ENCODE measurements at regions of chr16 and their contacts with region 1.

Region 1: DNA sequence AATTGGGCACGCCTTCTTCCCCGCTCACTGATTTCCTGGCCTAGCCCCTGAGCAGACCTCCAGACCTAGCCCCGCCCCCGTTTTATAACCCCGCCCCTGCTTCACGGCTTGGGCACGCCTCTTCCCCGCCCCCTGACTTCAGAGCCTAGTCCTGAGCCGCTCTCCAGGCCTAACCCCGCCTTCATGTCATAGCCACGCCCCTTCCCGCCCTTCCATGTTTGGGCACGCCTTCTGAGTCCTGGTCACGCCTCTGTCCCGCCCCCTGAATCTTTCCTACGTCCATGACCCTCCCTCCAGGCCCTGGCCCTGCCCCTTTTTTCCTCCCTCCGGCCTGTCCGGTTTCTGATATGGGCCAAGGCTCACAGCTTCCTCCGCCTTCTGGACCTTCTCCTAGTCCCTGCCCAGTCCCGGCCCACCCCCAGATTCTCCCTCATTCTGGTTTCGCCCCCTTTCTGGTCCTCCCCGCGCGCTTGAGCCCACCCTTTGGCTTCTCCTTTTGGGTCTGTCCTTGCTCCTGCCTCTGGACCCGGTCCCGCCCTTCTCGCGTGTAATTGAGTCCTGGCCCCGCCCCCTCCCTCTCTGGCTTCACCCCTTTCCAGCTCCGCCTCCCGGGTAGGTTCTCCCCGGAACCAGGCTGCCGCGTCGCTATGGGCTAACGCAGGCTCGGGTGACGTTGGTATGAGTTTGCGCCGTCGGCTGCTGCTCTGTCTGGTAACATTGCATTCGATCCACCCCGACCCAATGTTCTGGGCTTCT is 15.1 kb upstream of the EEF2K start:
- DNase-seq: peak; percentile 94
- H3K4me3 Mint-ChIP-seq: peak overlapping the region; percentile 88
- H3K27ac Mint-ChIP-seq: peak overlapping the region; percentile 99
- H3K4me1 Mint-ChIP-seq: peaks cover 68% of the 10 kb centered on the region
- H3K27me3 Mint-ChIP-seq: peaks cover 4% of the 10 kb centered on the region

Region 2: DNA sequence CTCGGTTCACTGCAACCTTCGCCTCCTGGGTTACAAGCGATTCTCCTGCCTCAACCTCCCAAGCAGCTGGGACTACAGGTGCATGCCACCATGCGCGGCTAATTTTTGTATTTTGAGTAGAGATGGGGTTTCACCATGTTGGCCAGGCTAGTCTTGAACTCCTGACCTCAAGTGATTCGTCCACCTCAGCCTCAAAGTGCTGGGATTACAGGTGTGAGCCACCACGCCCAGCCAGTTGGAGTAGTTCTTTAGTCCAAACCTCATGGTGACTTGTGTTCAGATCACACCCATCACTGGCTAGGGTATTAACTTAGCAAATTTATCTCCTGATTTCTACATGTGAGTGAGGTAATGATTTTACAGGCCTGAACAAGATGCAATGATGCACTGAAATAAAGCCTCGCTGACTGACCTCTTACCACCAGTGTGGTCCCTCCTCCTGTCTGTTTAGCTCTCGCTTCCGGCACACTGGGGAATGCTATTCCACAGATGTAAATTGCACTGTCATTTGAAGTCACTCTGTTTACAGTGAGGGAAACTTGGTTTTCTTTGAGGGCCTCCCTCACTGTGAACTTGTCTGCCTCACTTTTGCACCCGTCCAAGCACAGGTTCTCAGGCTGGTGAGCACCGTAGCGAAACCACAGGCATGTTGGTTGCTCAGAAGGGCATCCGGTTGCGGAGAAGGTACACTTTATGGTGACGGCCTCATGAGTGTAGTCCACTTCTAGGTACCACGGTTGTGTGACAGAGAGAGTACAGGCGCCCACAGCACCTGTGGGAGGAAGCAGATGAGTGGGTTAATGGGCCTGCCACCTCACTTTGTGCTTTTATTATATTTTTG is 544.0 kb before region 1 on chr16:
- intact Hi-C with region 1: loop called (anchors 10 kb)
- DNase-seq: peak; percentile 71
- H3K4me3 Mint-ChIP-seq: peak overlapping the region; percentile 57
- H3K27ac Mint-ChIP-seq: peak overlapping the region; percentile 81
- H3K4me1 Mint-ChIP-seq: peaks cover 36% of the 10 kb centered on the region
- H3K27me3 Mint-ChIP-seq: no peaks in the 10 kb centered on the region

Region 3: GRCh38 chr16:22007509-22008214 is 183.3 kb before region 1 on chr16 and contains the start of gene MOSMO:
- intact Hi-C with region 1: loop called (anchors 1 kb)
- DNase-seq: peak; percentile 62
- H3K4me3 Mint-ChIP-seq: peak within 1 kb of the TSS; percentile 92
- H3K27ac Mint-ChIP-seq: peak within 1 kb of the TSS; percentile 79
- H3K4me1 Mint-ChIP-seq: peaks cover 49% of the 10 kb centered on the region
- H3K27me3 Mint-ChIP-seq: peaks cover 10% of the 10 kb centered on the region
- total RNA-seq, gene MOSMO: 12.7 and 16.3 TPM in 2 replicates

Region 4: GRCh38 chr16:22109258-22109898 is 81.6 kb before region 1 on chr16:
- intact Hi-C with region 1: no loop called
- DNase-seq: no peak
- H3K4me3 Mint-ChIP-seq: no peak overlapping the region
- H3K27ac Mint-ChIP-seq: no peak overlapping the region
- H3K4me1 Mint-ChIP-seq: no peaks in the 10 kb centered on the region
- H3K27me3 Mint-ChIP-seq: peaks cover 11% of the 10 kb centered on the region

Region 5: DNA sequence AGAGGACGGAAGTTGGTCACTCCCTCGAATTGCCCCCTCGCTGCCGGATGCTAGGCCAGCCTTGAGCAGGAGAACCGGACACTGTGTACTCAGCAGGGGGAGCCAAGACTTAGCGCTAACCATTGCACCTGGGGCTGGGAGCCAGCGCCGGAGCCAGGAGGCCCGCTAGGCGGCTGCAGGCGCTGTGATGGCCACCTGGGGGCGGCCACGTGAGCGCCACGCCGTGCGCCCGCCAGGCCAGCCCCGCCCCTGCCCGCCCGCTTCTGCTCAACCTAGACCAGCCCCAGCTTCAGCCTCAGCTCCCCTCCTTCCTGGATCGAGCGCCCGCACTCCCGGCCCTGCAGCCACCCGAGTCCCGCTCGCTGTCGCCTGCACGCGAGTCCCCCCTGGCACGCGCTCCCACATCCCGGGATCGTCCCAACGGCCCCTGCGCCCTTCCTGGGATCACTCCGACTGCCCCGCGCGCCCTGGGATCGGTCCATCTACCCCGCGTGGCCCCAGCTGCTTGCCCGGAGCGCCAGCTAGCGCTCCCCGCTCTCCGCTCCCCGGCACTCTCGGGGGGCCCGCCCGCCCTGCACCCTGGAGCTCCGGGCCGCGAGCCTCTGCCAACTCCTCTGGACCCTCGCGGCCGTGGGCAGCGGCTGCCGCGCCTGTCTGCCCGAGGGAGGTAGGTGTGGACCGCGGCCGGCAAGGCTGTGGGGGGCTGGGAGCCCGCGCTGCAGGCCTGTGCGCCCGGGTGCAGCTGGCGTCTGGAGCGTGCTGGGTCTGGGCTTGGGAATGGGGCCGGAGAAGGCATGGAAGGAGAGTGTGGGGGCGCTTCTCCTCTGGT is 15.3 kb after region 1 on chr16 and contains the start of gene EEF2K:
- intact Hi-C with region 1: loop called (anchors 1 kb)
- DNase-seq: peak; percentile 77
- H3K4me3 Mint-ChIP-seq: peak within 1 kb of the TSS; percentile 91
- H3K27ac Mint-ChIP-seq: peak within 1 kb of the TSS; percentile 91
- H3K4me1 Mint-ChIP-seq: peaks cover 27% of the 10 kb centered on the region
- H3K27me3 Mint-ChIP-seq: no peaks in the 10 kb centered on the region
- total RNA-seq, gene EEF2K: 28.3 and 30.5 TPM in 2 replicates

Region 6: GRCh38 chr16:22353191-22353919 is 162.4 kb after region 1 on chr16:
- intact Hi-C with region 1: loop called (anchors 1 kb)
- DNase-seq: peak; percentile 6
- H3K4me3 Mint-ChIP-seq: peak overlapping the region; percentile 48
- H3K27ac Mint-ChIP-seq: peak overlapping the region; percentile 94
- H3K4me1 Mint-ChIP-seq: peaks cover 58% of the 10 kb centered on the region
- H3K27me3 Mint-ChIP-seq: no peaks in the 10 kb centered on the region